Calu3 (cell line): ENCODE measurements at regions of chr2 and their contacts with region 1.

Region 1: DNA sequence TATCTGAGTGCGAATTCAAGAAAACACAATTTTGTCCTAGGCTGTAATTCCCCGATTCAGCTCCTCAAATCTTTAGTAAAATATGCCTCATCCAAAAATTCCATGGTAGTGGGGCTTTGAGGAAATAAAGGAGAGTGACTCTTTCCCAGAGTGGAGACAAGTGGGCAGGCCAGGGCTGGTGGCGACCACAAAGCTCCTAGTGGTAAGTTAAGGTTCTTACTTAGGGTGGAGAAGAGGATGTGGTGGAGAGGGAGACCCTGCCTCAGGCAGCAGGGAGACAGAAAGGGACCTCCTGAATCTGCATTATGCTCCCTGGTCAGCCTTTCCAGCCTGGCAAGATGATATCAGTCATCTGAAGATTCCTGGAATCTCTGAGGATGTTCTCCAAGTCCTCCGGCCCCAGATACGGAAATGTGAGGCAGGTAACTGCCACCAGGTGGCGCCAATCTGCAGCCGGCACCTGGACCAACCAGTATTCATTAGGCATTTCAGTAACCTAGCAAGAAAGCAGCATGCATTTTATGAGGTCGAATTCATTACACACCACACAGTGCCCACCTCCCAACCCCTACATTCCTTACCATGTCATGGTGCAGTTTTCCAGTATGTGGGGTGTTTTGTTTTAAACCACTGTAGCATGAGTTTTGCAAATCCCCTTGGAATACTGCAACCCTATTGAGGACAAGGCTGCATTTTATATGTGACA is 106.4 kb downstream of the POLE4 start:
- DNase-seq: peak; percentile 75
- H3K4me3 Mint-ChIP-seq: no peak overlapping the region
- H3K27ac Mint-ChIP-seq: no peak overlapping the region
- H3K4me1 Mint-ChIP-seq: no peaks in the 10 kb centered on the region
- H3K27me3 Mint-ChIP-seq: peaks cover 20% of the 10 kb centered on the region
- CTCF ChIP-seq: peak; percentile 76

Region 2: DNA sequence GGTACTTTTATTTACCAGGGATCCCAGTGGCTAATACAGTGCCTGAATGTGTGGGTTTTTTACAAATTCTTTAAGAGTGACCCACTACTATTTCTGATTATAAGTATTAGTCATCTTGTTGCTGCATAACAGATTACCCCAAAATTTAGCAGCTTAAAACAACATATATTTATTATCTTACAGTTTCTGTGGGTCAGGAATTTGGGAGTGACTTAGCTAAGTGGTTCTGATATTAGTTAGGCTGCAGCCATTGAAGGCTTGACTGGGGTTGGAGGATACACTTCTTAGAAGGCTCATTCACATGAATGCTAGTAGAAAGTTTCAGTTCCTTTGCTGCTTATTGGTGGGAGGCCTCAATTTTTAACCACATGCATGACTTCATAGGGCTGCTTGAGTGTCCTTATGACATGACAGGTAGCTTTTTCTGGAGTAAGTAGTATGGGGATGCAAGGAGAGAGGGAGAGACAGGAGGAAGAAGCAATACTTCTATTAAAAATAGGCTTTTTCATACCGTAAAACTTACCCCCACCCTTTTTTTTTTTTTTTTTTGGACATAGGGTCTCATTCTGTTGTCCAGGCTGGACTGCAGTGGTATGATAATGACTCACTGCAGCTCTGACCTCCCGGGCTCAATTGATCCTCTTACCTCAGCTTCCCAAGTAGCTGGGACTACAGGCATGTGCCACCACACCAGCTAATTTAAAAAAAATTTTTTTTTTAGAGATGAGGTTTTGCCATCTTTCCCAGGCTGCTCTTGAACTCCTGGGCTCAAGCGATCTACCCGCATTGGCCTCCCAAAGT is 119.7 kb before region 1 on chr2:
- CTCF ChIA-PET with region 1: no interaction called
- intact Hi-C with region 1: no loop called
- DNase-seq: no peak
- H3K4me3 Mint-ChIP-seq: no peak overlapping the region
- H3K27ac Mint-ChIP-seq: no peak overlapping the region
- H3K4me1 Mint-ChIP-seq: no peaks in the 10 kb centered on the region
- H3K27me3 Mint-ChIP-seq: peaks cover 13% of the 10 kb centered on the region
- CTCF ChIP-seq: no peak

Region 3: DNA sequence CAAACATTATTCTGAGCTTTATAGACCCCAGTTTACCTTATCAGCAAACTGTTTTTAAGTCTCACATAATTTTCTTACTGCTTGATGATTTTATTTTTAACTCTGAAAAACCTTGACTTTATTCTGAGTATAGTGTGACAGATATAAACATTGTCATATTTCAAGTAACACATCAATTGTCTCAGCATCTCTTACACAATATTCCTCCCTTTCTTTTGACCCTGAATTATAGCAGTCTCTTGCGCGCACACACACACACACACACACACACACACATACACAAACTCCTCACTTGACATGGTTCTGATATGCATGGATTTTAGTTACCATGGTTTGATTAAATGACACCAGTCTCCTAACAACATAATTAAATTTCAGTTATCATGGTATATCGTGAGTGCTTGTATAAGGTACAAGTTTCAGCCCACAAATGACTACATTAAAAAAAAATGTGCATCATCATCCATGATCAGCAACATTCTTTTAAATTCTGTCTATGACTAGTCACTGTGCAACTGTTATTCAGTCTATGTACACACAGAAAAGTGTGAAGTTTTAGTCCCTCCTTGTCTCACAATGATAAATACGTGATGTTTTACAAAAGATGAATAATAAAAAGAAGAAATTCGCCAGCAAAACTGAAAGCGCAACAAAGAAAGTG is 174.0 kb after region 1 on chr2:
- CTCF ChIA-PET with region 1: interaction called, 3 read pairs
- intact Hi-C with region 1: loop called (anchors 10 kb)
- DNase-seq: no peak
- H3K4me3 Mint-ChIP-seq: no peak overlapping the region
- H3K27ac Mint-ChIP-seq: no peak overlapping the region
- H3K4me1 Mint-ChIP-seq: peaks cover 8% of the 10 kb centered on the region
- H3K27me3 Mint-ChIP-seq: peaks cover 20% of the 10 kb centered on the region
- CTCF ChIP-seq: no peak

Region 4: DNA sequence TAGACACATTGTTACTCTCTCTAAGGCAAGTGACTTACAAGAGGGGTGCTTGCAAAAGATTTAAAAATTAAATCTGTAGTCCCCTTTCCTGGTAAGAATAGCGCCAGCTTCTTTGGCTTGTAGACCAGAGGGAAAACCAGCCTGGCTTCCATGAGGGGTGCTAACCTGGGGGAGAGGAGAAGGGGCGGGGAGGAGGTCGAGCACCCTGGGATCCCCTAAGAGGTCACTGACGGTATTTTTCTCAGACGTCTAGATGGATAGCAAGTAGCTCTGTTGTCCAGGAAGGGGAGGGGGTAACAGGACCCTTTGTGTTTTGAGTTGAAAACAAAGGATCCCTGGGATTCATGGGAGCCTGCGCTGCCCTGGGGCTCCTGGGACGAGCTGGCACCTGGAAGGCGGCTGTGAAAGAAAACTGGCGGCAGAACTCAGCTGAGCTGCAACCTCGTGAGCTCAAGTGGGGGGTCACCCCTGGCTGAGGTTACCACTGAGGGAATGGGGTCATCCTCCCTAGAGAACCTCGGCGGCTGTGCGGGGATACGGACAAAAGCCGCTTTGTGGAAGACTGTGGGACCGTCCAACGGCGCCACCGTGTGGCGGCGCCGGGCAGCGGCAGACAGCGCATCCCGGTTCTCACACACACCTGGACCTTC is 544.0 kb after region 1 on chr2:
- CTCF ChIA-PET with region 1: no interaction called
- intact Hi-C with region 1: loop called (anchors 5 kb)
- DNase-seq: peak; percentile 69
- H3K4me3 Mint-ChIP-seq: no peak overlapping the region
- H3K27ac Mint-ChIP-seq: no peak overlapping the region
- H3K4me1 Mint-ChIP-seq: no peaks in the 10 kb centered on the region
- H3K27me3 Mint-ChIP-seq: peaks cover 83% of the 10 kb centered on the region
- CTCF ChIP-seq: peak; percentile 91